ENCODE measurements at regions of chr12 and their contacts with region 1.

Region 1: GRCh38 chr12:52879394-52880351 is 25.2 kb downstream of the KRT8 start:
- DNase-seq: peak; percentile 76
- CTCF ChIP-seq: peak; percentile 66

Region 2: GRCh38 chr12:52380271-52380694 is 499.4 kb before region 1 on chr12:
- in situ Hi-C with region 1: loop called (anchors 10 kb)
- DNase-seq: no peak
- CTCF ChIP-seq: no peak

Region 3: DNA sequence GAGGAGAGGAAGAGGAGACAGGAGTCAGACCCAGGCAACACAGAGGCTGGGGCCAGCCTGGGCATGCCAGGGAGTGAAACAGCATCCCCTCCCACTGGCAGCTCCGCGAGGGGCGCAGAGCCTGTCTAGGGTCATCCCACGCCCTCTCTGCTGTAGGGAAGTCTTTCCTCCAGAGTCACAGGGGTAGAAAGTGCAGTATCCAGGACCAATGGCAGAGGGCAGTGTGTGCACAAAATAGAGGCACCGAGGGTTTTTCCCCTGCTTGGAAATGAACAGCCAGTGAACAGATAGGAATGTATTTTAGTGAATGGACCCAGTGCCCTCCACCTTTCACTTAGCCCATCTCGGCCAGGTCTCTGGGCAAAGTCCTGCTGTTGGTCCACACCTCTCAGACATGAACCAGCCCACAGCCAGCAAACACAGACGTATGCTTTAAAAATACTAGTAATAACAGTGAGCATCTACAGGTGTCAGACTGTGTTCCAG is 296.7 kb before region 1 on chr12:
- in situ Hi-C with region 1: loop called (anchors 10 kb)
- DNase-seq: peak; percentile 77
- CTCF ChIP-seq: peak; percentile 51